Prostate gland (tissue), 2 donors: ENCODE measurements at regions of chr10 and their contacts with region 1.

Region 1: DNA sequence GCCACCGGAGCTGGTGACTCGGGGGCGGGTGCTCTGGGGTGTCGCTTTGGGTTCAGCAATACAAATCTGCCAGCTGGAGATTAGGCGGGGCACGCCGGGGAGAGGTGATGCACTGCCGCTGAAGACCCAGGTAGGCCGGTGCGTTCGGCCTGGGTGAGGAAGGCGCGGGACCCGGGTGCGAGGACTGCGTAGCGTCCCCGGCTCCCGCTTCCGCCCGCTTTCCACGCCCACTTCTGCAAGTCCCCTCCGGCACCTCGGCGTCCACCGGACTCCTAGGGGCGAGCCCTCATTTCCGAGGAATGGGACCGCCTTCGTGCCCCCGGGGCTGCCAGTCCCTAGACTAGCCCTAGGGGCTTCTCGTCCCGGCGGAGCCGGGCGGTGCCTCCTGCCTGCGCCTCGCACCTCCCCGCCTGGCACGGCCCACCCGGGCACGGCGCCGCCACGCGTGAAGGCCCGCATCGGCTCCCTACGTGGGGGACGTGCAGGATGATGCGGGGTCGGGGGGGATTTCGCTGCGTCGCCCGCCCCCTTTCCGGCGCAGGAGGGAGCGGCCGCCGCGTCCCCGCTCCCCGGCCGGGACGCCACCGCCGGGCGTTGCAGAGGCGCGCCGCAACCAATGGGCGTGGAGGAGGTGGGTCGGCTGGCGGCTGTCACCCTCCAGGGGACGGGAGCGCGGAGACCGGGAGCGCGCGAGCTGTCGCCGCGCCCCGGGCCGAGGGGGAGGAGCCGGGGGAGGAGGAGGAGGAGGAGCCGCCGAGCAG is 40.0 kb downstream of the HK1 start:
- DNase-seq: peak; percentile 93
- H3K4me3 ChIP-seq: peak overlapping the region; percentile 95 to 98
- H3K27ac ChIP-seq: peak overlapping the region; percentile 94 to 98
- H3K4me1 ChIP-seq: peaks cover 17% of the 10 kb centered on the region
- H3K27me3 ChIP-seq: no peaks in the 10 kb centered on the region
- CTCF ChIP-seq: peak in 1 of 4 experiments; percentile 28
- POLR2A ChIP-seq: peak; percentile 94

Region 2: DNA sequence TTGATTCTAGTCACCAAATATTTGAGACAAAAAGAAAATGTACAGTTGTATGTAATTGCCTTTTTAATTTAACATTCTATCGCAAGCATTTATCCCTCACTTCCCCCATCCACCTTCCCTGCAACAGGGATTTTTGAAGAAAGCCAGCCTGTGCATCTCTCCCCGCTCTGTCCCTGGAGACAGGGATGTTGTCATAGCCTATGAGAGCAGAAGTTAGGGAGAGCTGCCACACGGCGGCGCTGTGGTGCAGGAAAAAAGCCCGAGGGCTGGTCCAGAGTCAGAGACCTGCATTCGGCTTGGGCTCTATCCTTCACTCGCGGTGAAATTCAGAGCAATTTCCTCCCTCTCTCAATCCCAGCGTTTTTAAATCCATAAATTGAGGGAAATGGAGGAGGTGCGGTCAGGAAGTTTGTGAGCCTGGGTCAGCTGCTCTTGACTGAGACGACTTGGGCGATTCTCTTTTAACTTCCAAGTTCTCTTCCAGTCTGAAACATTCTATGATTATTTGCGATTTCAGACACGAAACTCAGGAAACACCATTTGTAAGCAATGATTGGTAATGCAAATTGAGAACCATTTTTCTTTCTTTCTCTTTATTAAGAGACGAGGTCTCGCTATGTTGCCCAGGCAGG is 80.6 kb before region 1 on chr10:
- intact Hi-C with region 1: loop called (anchors 5 kb)
- DNase-seq: peak; percentile 79
- H3K4me3 ChIP-seq: no peak overlapping the region
- H3K27ac ChIP-seq: no peak overlapping the region
- H3K4me1 ChIP-seq: no peaks in the 10 kb centered on the region
- H3K27me3 ChIP-seq: no peaks in the 10 kb centered on the region
- CTCF ChIP-seq: peak; percentile 76 to 97 (median 95)
- POLR2A ChIP-seq: no peak

Region 3: GRCh38 chr10:69253171-69253570 is 65.1 kb before region 1 on chr10:
- intact Hi-C with region 1: no loop called
- DNase-seq: no peak
- H3K4me3 ChIP-seq: no peak overlapping the region
- H3K27ac ChIP-seq: no peak overlapping the region
- H3K4me1 ChIP-seq: no peaks in the 10 kb centered on the region
- H3K27me3 ChIP-seq: no peaks in the 10 kb centered on the region
- CTCF ChIP-seq: no peak
- POLR2A ChIP-seq: no peak

Region 4: DNA sequence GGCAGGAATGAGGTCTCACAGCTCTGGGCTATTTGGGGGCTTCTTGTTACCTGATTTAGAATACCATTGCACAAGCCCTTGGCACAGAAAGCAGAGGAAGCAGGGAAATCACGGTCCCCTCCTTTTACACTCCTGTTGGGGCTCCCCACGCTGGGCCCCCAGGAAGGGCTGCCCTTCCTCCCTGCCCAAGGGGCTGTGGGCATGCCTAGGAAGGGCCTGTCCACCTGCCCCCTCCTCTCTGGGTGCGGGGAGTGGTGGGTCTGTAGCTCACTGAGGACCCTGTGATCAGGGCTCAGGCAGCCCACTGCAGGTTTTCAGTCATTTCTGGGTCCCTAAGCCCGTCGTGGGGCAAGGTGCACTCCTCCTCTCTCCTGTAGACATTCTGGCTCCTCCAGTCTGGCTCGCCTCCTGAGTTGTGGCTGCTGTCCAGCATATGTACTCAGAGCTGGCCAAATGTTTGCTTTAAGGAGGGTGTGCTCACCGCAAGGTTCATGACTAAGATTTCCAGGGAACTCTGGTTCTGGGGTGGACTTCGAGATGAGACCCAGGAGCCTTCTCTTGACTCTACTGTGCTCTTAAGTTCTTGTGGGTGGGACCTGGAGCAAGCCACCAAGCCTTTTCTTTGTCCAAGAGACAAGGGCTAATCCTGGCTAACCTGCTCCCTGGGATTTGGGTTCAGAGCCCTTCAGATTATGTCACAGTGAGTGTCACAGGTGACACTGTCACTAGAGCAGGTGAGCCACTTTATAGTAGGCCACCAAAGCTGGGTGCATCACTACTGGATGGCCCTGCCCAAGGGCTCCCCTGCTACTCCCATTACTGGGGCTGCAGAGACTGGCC is 42.4 kb after region 1 on chr10:
- intact Hi-C with region 1: loop called (anchors 5 kb)
- DNase-seq: peak; percentile 95
- H3K4me3 ChIP-seq: no peak overlapping the region
- H3K27ac ChIP-seq: peak overlapping the region; percentile 77 to 86
- H3K4me1 ChIP-seq: peaks cover 19% of the 10 kb centered on the region
- H3K27me3 ChIP-seq: no peaks in the 10 kb centered on the region
- CTCF ChIP-seq: no peak
- POLR2A ChIP-seq: peak; percentile 43

Region 5: DNA sequence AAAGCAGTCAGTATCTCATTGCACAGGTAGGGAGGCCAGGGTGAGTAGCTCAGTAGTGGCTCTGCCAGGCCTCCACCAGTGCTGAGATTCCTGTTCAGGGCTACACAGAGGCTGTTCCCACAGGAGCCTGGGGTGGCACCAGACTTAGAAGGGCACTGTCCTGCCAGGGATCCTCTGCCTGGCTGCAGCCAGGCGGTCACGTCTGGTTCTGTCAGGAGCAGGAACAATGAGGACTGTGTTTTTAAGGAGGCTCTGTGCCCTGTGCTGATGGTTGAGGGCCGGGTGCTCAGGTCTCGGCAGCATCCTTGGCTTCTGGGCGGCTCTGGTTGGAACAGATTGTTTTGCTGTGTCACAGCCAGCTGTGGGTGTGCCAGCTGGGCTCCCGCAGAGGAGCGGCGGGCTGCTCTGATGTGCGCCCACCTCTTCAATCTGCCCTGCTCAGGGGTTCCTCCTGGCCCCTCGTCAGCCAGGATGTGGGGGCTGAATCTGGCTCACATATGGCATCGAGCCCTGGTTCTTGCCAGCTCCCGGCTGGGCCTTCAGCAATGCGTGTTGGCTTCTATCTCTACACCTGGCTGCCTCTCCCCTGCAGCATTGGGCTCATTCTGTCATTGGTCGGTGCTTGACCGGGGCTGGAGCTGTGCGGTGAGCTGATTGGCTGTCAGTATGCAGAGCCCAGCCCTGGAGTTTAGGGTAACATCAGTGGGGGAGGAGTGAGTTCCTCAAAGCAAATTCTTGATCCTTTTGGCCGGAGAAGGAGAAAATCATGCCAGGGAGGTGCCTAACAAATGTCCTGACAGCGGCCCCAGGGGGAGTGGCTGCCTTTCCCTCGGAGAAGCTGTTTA is 57.2 kb after region 1 on chr10:
- intact Hi-C with region 1: loop called (anchors 5 kb)
- DNase-seq: peak; percentile 94
- H3K4me3 ChIP-seq: no peak overlapping the region
- H3K27ac ChIP-seq: peak overlapping the region; percentile 71 to 77
- H3K4me1 ChIP-seq: peaks cover 22% of the 10 kb centered on the region
- H3K27me3 ChIP-seq: no peaks in the 10 kb centered on the region
- CTCF ChIP-seq: peak in 2 of 4 experiments; percentile 26 to 56
- POLR2A ChIP-seq: no peak

Region 6: DNA sequence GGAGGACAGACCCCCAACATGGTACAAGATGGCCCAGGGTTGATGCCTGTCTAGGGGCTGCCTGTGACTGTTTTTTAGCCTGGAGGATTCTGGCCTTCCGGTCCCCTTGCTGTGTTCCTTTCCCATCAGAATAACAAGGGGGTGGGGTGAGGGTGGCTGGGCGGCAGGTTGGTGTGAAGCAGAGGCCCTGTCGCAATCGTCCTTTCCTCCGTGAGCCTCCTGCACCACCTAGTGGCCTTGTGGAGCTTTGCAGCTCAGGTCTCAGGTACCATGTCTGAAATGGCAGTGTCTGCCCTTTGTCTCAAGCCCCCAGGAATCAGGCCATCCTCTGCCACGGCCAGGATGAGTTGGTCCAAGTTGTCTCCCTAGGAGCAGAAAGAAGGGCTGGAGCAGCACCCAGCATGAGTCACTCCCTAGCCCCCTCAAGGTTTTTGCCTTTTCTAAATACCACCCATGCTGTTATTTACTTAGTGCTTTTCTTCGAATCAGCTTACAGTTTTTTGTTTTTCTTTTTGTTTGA is 74.3 kb after region 1 on chr10:
- intact Hi-C with region 1: loop called (anchors 5 kb)
- DNase-seq: peak; percentile 90
- H3K4me3 ChIP-seq: no peak overlapping the region
- H3K27ac ChIP-seq: peak overlapping the region; percentile 45 to 60
- H3K4me1 ChIP-seq: peaks cover 5% of the 10 kb centered on the region
- H3K27me3 ChIP-seq: no peaks in the 10 kb centered on the region
- CTCF ChIP-seq: peak; percentile 81 to 99 (median 98)
- POLR2A ChIP-seq: no peak

Region 7: DNA sequence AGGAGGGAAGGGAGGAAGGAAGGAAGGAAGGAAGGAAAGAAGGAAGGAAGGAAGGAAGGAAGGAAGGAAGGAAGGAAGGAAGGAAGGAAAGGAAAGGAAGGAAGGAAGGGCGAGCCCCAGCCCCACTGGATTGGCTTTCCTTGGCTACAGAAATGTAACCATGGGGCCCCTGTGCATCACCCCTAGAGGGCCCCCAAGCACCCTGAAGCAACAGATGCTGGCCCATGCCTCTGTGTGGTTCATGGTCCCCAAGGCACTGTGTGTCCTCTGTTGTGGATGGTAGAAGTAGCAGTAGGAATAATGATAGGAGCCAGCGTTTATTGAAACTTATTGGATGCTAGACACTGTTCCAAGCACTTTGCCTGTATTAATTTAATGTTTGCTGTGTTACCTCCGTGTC is 617.8 kb after region 1 on chr10:
- intact Hi-C with region 1: no loop called
- DNase-seq: no peak
- H3K4me3 ChIP-seq: no peak overlapping the region
- H3K27ac ChIP-seq: no peak overlapping the region
- H3K4me1 ChIP-seq: no peaks in the 10 kb centered on the region
- H3K27me3 ChIP-seq: no peaks in the 10 kb centered on the region
- CTCF ChIP-seq: no peak
- POLR2A ChIP-seq: no peak